ENCODE measurements at regions of chr11 and their contacts with region 1.

Region 1: DNA sequence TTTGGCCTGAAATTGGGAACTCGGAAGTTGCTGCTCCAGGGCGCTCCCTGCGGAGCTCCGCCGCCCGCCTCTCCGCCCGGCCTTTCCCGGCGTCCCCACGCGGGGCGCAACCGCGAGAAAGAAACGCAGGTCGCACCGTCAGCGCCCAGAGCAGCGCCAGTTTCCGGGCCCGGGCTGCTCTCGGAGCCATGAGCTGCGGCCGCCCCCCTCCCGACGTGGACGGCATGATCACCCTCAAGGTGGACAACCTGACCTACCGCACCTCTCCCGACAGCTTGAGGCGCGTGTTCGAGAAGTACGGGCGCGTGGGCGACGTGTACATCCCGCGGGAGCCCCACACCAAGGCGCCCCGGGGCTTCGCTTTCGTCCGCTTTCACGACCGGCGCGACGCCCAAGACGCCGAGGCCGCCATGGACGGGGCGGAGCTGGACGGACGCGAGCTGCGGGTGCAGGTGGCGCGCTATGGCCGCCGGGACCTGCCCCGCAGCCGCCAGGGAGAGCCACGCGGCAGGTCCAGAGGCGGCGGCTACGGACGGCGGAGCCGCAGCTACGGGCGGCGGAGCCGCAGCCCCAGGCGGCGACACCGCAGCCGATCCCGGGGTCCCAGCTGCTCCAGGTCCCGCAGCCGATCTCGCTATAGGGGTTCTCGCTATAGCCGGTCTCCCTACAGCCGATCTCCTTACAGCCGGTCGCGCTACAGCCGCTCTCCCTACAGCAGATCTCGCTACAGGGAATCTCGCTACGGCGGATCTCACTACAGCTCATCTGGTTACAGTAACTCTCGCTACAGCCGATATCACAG is 521 bp downstream of the SRSF8 start:
- DNase-seq: peak; percentile 79
- H3K4me3 ChIP-seq: peak overlapping the region; percentile 78 to 98 (median 79)
- H3K27ac ChIP-seq: peak overlapping the region; percentile 62
- H3K4me1 ChIP-seq: peaks cover 19% of the 10 kb centered on the region
- H3K27me3 ChIP-seq: peaks cover 1 to 6% of the 10 kb centered on the region in 2 experiments
- CTCF ChIP-seq: peak; percentile 48 to 77
- POLR2A ChIP-seq: peak; percentile 66

Region 2: GRCh38 chr11:94794287-94795168 is 272.7 kb before region 1 on chr11:
- CTCF ChIA-PET with region 1: no interaction called
- POLR2A ChIA-PET with region 1: no interaction called
- dilution Hi-C with region 1: no loop called
- intact Hi-C with region 1: loop called (anchors 2 kb)
- DNase-seq: peak; percentile 93
- H3K4me3 ChIP-seq: peak overlapping the region in 2 of 3 experiments; percentile 4 to 15
- H3K27ac ChIP-seq: peak overlapping the region; percentile 90
- H3K4me1 ChIP-seq: peaks cover 44% of the 10 kb centered on the region
- H3K27me3 ChIP-seq: no peaks in the 10 kb centered on the region
- CTCF ChIP-seq: no peak
- POLR2A ChIP-seq: no peak

Region 3: GRCh38 chr11:95055283-95055897 is 11.8 kb before region 1 on chr11:
- CTCF ChIA-PET with region 1: interaction called, 17 read pairs
- POLR2A ChIA-PET with region 1: no interaction called
- dilution Hi-C with region 1: no loop called
- intact Hi-C with region 1: no loop called
- DNase-seq: no peak
- H3K4me3 ChIP-seq: no peak overlapping the region
- H3K27ac ChIP-seq: no peak overlapping the region
- H3K4me1 ChIP-seq: no peaks in the 10 kb centered on the region
- H3K27me3 ChIP-seq: peaks cover 11 to 21% of the 10 kb centered on the region in 2 experiments
- CTCF ChIP-seq: no peak
- POLR2A ChIP-seq: no peak

Region 4: DNA sequence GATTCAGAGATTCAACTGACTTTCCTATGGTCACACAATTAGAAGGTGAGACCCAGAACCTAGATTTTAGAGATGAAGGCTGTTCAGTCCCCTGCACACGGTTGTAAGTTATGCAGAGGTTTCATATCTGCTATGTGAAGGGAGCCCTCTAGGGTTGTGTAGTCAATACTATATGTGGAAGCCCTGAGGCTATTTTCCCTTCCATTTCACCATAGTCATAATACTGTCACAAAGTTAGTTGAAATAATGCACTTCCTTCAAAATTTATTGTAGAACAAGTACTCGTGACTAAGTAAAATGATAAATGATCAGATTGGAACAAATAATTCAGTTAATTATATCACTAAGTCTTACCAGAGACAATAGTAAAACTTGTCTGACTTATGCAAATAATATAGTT is 71.2 kb after region 1 on chr11:
- CTCF ChIA-PET with region 1: interaction called, 35 read pairs
- POLR2A ChIA-PET with region 1: no interaction called
- dilution Hi-C with region 1: no loop called
- intact Hi-C with region 1: loop called (anchors 1 kb)
- DNase-seq: peak; percentile 42
- H3K4me3 ChIP-seq: no peak overlapping the region
- H3K27ac ChIP-seq: no peak overlapping the region
- H3K4me1 ChIP-seq: no peaks in the 10 kb centered on the region
- H3K27me3 ChIP-seq: no peaks in the 10 kb centered on the region
- CTCF ChIP-seq: peak in 1 of 2 donors; percentile 26
- POLR2A ChIP-seq: no peak

Region 5: DNA sequence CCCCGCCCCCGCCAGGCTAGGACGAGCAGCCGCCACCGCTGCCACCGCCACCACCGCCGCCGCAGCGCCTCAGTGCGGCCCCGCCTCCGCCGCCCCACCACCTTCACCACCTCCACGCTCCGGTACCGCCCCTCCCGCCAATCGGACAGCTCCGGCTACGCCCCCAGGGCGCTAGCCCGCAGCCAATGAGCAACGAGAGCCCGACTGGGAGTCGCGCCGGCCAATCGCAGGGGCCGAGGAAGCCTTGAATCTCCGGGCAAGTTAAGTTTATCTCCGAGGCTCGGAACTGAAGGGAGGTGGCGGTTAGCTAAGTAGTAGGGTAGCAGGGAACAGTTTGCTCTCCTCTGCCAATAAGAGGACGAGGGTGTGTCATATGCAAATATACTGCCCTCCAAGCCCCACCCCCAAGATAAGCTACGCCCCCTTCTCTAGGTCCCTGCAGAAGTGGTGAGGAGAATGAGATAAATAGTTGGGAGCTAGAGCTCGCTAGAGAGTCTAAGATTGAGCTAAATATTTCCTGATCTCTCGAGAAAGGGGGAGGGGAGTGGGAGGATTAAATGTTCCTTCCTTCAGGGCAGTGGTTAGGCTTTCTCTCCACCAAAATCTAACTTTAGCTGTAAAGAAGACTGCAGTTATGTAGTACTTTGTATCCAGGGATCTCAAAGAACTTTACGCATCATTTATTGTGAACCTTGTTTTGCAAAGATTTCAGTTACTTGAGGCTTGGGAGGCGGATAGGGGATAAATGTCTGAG is 164.1 kb after region 1 on chr11 and contains the start of gene SESN3:
- CTCF ChIA-PET with region 1: interaction called, 5 read pairs
- POLR2A ChIA-PET with region 1: no interaction called
- dilution Hi-C with region 1: no loop called
- intact Hi-C with region 1: loop called (anchors 2 kb)
- DNase-seq: peak; percentile 99
- H3K4me3 ChIP-seq: peak within 1 kb of the TSS; percentile 43 to 65 (median 49)
- H3K27ac ChIP-seq: no peak within 1 kb of the TSS
- H3K4me1 ChIP-seq: peaks cover 11% of the 10 kb centered on the region
- H3K27me3 ChIP-seq: peaks cover 15 to 43% of the 10 kb centered on the region in 2 experiments
- CTCF ChIP-seq: no peak
- POLR2A ChIP-seq: no peak
- total RNA-seq, gene SESN3: 5.6 and 6.9 TPM in 2 replicates

Region 6: GRCh38 chr11:95790123-95790932 is 723.1 kb after region 1 on chr11 and contains the start of gene CEP57:
- CTCF ChIA-PET with region 1: no interaction called
- POLR2A ChIA-PET with region 1: no interaction called
- dilution Hi-C with region 1: no loop called
- intact Hi-C with region 1: loop called (anchors 1 kb)
- DNase-seq: peak; percentile 97
- H3K4me3 ChIP-seq: peak within 1 kb of the TSS; percentile 75 to 85 (median 84)
- H3K27ac ChIP-seq: peak within 1 kb of the TSS; percentile 90
- H3K4me1 ChIP-seq: peaks cover 21% of the 10 kb centered on the region
- H3K27me3 ChIP-seq: no peaks in the 10 kb centered on the region
- CTCF ChIP-seq: no peak
- POLR2A ChIP-seq: peak; percentile 79
- total RNA-seq, gene CEP57: 35.2 and 38.5 TPM in 2 replicates